ENCODE measurements at regions of chr3 and their contacts with region 1.

Region 1: DNA sequence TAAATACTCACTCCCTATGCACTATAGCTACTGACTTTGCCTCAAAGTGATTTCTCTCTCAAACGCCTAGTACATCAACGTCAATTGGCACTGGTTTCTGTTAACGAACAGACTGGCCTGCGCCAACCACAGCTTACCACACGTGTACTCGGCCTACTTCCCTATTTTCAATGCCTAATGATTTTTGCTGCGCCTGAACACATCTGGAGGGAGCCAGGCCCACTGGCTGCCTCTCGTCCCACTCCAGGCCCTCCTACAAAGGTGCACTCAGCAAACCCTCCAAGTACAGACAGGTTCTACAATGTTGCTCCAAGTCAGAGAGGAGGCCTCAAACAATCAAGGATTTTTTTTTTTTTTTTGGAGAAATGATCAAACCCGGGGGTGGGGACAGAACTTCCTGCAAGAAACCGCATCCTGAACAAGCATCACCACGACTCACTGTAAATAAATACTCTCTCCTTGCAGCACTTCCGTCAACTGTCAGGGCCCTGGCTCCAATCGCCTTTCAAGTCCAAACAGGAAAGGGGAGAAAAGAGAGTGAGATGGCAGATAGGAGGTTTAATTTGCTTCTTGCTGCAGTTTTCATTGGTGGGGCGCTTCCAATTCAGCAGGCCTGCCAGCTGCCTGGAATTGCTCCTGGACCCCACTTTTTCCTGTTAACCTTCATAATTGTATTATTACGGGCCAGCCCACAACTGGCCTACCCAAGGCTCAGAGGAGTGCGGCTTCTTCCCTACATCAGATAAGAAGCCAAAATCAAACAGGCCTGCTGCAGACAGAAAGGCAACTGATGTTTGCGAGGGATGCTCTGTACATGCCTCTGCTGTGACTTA is 139.3 kb downstream of the FOXP1 start:
- DNase-seq: peak; percentile 62
- ATAC-seq: peak; percentile 80
- H3K4me3 Mint-ChIP-seq: peak overlapping the region; percentile 78
- H3K27ac Mint-ChIP-seq: peak overlapping the region; percentile 99
- H3K4me1 Mint-ChIP-seq: peaks cover 93% of the 10 kb centered on the region
- H3K27me3 Mint-ChIP-seq: no peaks in the 10 kb centered on the region
- CTCF ChIP-seq: no peak

Region 2: DNA sequence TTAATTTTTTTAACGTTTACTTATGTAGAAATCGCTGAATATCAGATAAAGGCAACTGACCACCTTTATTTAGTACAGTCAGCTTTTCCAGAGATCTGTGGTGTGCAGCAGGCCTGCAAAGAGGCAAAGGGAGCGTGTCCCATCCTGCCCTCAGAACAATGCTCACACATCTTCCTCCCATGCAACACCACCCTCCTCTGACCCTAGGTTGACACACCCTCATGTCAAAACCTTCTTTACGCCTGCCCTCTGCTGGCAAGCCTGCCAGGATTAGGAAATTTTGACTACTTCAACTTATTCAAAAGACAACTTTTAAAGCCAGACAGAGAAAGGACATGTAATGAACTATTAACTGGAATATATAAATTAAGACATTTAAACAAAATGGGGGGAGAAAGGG is 374.4 kb before region 1 on chr3:
- CTCF ChIA-PET with region 1: no interaction called
- POLR2A ChIA-PET with region 1: interaction called, 26 read pairs
- intact Hi-C with region 1: loop called (anchors 5 kb)
- DNase-seq: no peak
- ATAC-seq: peak; percentile 44
- H3K4me3 Mint-ChIP-seq: peak overlapping the region; percentile 36
- H3K27ac Mint-ChIP-seq: peak overlapping the region; percentile 79
- H3K4me1 Mint-ChIP-seq: peaks cover 89% of the 10 kb centered on the region
- H3K27me3 Mint-ChIP-seq: no peaks in the 10 kb centered on the region
- CTCF ChIP-seq: no peak

Region 3: GRCh38 chr3:71360764-71361163 is 83.5 kb before region 1 on chr3:
- CTCF ChIA-PET with region 1: no interaction called
- POLR2A ChIA-PET with region 1: interaction called, 6 read pairs
- intact Hi-C with region 1: loop called (anchors 1 kb)
- DNase-seq: no peak
- ATAC-seq: peak; percentile 62
- H3K4me3 Mint-ChIP-seq: peak overlapping the region; percentile 81
- H3K27ac Mint-ChIP-seq: peak overlapping the region; percentile 93
- H3K4me1 Mint-ChIP-seq: peaks cover 88% of the 10 kb centered on the region
- H3K27me3 Mint-ChIP-seq: no peaks in the 10 kb centered on the region
- CTCF ChIP-seq: no peak

Region 4: DNA sequence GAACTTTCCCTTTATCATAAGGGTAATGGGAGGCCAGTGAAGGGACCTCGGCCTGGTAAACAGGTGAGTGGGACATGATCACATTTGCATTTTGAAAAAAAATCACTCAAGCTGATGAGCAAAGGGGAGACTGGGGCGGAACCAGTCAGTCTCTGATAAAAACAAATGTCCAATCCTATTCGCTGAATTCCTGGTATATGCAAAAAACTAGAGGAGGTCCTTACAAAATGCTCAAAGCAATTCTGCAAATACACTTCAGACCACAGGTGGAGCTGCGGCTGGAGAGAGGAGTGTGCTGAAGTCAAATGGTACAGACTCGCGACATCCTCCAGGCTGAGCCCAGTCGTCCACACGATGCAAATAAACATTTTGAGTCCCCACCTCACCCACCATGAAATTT is 27.4 kb before region 1 on chr3:
- CTCF ChIA-PET with region 1: interaction called, 13 read pairs
- POLR2A ChIA-PET with region 1: interaction called, 50 read pairs
- intact Hi-C with region 1: loop called (anchors 1 kb)
- DNase-seq: no peak
- ATAC-seq: peak; percentile 54
- H3K4me3 Mint-ChIP-seq: peak overlapping the region; percentile 42
- H3K27ac Mint-ChIP-seq: peak overlapping the region; percentile 81
- H3K4me1 Mint-ChIP-seq: peaks cover 82% of the 10 kb centered on the region
- H3K27me3 Mint-ChIP-seq: no peaks in the 10 kb centered on the region
- CTCF ChIP-seq: no peak

Region 5: DNA sequence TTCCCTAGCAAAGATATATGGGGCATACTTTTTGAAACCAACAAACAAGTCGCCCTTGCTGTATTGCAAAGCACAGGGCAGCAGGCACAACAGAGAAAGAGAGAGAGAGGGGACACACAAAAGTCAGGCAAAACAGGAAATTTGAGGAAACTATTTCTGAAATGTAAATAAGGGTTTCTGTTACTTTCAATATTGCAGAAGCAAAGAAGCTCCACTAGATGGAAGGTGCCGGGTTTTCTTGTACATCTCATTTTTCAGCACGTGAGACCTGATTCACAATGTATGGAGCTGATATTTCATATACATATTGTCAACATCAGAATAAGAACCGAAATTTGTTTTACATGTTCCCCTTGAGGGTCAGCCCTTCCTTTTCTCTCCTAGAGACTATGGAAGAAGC is 11.9 kb after region 1 on chr3:
- CTCF ChIA-PET with region 1: interaction called, 8 read pairs
- POLR2A ChIA-PET with region 1: interaction called, 66 read pairs
- intact Hi-C with region 1: loop called (anchors 1 kb)
- DNase-seq: no peak
- ATAC-seq: peak; percentile 35
- H3K4me3 Mint-ChIP-seq: peak overlapping the region; percentile 66
- H3K27ac Mint-ChIP-seq: peak overlapping the region; percentile 88
- H3K4me1 Mint-ChIP-seq: peaks cover 76% of the 10 kb centered on the region
- H3K27me3 Mint-ChIP-seq: no peaks in the 10 kb centered on the region
- CTCF ChIP-seq: no peak

Measured in activated B cell treated with CpG ODN at 0.5 μM for 24 hours (primary cell).